ENCODE measurements at regions of chr11 and their contacts with region 1.

Region 1: GRCh38 chr11:2532704-2533586 is 88.1 kb downstream of the KCNQ1 start:
- DNase-seq: peak; percentile 84 to 92
- H3K4me3 ChIP-seq: peak overlapping the region in 1 of 2 donors; percentile 36
- H3K27ac ChIP-seq: no peak overlapping the region
- H3K4me1 ChIP-seq: peaks cover 0 to 10% (median 5%) of the 10 kb centered on the region in 4 donors
- H3K27me3 ChIP-seq: peaks cover 0 to 43% of the 10 kb centered on the region in 2 donors
- CTCF ChIP-seq: peak; percentile 99 to 100

Region 2: GRCh38 chr11:2428322-2428795 is 104.6 kb before region 1 on chr11:
- intact Hi-C with region 1: loop called (anchors 1 kb)
- DNase-seq: peak in 1 of 2 donors; percentile 71
- H3K4me3 ChIP-seq: no peak overlapping the region
- H3K27ac ChIP-seq: no peak overlapping the region
- H3K4me1 ChIP-seq: no peaks in the 10 kb centered on the region
- H3K27me3 ChIP-seq: peaks cover 0 to 50% of the 10 kb centered on the region in 2 donors
- CTCF ChIP-seq: peak; percentile 43 to 46

Region 3: DNA sequence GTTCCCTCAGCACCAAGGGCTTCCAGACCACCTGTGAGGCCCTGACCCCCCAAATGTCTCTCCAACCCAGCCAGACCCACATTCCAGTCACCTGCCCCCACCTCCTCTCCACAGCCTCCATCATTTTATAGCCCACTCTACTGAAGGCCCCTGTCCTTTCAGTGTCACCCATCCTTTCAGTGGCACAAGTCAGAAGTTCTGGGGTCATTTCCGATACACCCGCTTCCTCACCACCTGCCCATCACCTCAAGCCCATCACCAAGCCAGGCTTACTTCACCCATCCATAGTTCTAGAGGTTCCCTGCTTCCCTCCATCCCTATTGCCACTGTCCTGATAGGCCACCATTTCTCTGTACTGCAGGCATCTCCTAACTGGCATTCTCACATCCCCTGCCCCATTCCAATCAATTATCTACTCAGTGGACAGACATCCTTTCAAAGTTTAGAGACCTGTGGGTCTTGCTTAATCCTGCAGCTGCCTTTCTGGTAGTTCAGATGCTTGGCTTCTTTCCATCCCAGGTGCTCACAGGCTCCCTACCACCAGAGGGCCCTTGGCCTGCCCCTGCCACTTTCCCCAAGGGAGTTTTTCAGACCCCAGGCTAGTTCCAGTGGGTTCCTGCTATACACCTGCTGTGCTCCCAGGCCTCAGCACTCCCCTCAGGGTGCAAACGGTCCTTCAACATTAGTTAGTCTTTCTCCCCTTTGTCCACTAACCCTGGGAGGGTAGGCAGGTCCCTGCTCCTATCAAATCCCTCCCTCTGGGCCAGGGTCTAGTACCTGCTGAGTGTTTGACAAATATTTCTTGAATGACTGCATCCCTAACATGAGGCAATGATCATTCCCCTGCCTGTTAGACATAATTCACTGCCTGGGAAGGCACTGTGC is 159.3 kb after region 1 on chr11:
- intact Hi-C with region 1: loop called (anchors 5 kb)
- DNase-seq: peak; percentile 6 to 19
- H3K4me3 ChIP-seq: no peak overlapping the region
- H3K27ac ChIP-seq: no peak overlapping the region
- H3K4me1 ChIP-seq: peaks cover 0 to 14% (median 8%) of the 10 kb centered on the region in 4 donors
- H3K27me3 ChIP-seq: no peaks in the 10 kb centered on the region
- CTCF ChIP-seq: no peak

Region 4: DNA sequence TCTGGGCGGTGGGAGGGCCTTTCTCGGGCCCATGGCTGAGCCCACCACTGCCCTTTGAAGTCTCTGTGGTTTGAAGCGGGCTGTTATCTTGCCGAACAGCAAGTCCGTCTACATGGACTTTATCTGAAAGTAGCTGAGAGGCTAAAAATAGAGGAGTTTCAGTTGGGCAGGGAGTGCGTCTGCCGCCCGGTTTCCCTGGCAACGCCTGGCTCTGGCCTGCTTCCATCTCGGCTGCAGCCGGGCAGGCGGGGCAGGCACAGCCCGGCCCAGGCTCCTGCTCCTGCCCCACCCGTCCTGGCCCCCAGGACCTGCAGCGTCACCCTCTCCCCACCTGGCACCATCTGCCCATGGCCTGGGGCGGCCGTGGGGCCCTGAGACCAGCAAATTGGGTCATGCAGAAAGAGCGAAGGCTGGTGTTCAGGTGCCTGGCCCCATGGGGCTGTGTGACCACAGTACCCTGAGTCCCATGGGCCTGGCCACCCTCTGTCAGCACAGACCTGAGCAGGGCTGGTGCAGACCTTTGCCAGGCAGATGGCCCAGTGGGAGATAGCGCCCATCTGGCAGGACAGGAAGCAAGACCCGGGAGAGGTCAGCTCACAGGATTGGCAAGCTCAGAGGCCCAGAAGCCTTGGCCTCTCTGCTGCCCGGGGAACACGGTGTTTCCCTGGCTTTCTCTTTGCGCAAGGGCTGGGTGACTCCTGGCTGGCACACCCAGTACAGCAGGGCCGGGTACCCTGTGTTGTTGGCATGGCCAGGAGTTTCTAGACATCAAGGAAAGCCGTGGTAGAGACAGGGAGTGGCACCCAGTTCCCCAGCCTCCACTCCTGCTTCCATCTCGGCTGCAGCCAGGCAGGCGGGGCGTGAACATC is 245.9 kb after region 1 on chr11:
- intact Hi-C with region 1: loop called (anchors 2 kb)
- DNase-seq: peak; percentile 75 to 94
- H3K4me3 ChIP-seq: peak overlapping the region; percentile 35 to 43
- H3K27ac ChIP-seq: peak overlapping the region; percentile 74 to 86
- H3K4me1 ChIP-seq: peaks cover 0 to 42% (median 36%) of the 10 kb centered on the region in 4 donors
- H3K27me3 ChIP-seq: no peaks in the 10 kb centered on the region
- CTCF ChIP-seq: peak; percentile 50

Region 5: GRCh38 chr11:2885676-2886081 is 352.7 kb after region 1 on chr11 and contains the start of gene CDKN1C:
- intact Hi-C with region 1: loop called (anchors 1 kb)
- DNase-seq: peak; percentile 91 to 96
- H3K4me3 ChIP-seq: peak within 1 kb of the TSS; percentile 87 to 89
- H3K27ac ChIP-seq: peak within 1 kb of the TSS; percentile 82 to 84
- H3K4me1 ChIP-seq: peaks cover 0 to 40% (median 14%) of the 10 kb centered on the region in 4 donors
- H3K27me3 ChIP-seq: peaks cover 0 to 5% of the 10 kb centered on the region in 2 donors
- CTCF ChIP-seq: peak in 1 of 2 experiments; percentile 11

Measured in tibial artery (tissue), 4 donors.